ENCODE measurements at regions of chr21 and their contacts with region 1.

Region 1: GRCh38 chr21:32151782-32152181 is 127.1 kb downstream of the MIS18A start:
- DNase-seq: no peak

Region 2: DNA sequence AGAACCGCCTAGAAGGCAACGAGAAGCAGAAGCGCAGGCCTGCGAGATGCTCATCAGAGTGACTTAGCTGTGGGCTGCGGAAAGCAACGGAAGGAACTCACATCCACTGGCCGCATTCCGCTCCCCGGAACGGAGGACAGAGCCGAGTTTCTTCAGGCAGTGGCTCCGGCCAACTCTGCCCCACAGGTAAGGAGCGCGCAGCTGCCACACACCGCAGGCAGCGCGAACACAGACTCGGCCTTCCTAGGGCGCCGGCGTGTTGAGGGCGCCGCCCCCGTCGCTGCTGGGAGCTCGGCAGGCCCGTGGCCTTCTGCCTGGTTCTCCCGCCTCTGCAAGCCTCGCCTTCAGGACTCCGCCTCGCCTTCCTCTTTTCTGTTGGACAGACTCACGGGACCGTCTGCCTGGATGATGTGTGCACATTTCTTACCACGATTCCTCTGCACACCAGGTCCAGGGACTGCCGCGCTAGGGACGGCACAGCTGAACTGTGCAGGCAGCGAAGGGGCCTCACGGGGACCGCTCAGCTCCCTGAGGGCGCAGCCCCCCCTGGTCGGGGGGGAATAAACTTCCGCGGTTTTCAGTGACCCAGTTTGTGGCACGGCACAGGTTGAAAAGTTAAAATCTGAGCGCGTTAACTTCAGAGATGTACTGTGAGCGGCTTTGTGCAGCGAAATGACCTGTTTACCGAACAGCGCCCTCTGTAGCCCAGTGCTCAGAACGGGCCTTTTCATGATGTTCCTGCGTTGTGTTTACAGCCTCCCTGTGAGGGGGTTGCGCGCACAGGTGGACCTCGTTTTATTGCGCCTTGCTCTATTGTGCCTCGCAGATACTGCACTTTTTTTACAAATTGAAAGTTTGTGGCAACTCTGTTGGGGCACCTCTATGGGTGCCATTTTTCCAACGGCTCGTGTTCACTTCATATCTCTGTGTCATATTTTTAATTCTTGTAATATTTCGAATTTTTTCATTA is 417.8 kb after region 1 on chr21:
- intact Hi-C with region 1: no loop called
- DNase-seq: peak; percentile 89

Region 3: GRCh38 chr21:33249331-33250002 is 1097.7 kb after region 1 on chr21:
- intact Hi-C with region 1: loop called in 1 of 2 experiments (anchors 5 kb)
- DNase-seq: no peak